Ovary (tissue), 10 donors: ENCODE measurements at regions of chr20 and their contacts with region 1.

Region 1: GRCh38 chr20:37426106-37426505 is 80.2 kb downstream of the SRC start:
- DNase-seq: no peak
- H3K4me3 ChIP-seq: no peak overlapping the region
- H3K27ac ChIP-seq: no peak overlapping the region
- H3K4me1 ChIP-seq: no peaks in the 10 kb centered on the region
- H3K27me3 ChIP-seq: no peaks in the 10 kb centered on the region
- CTCF ChIP-seq: no peak
- EP300 ChIP-seq: no peak
- POLR2A ChIP-seq: no peak

Region 2: GRCh38 chr20:36408219-36408618 is 1017.9 kb before region 1 on chr20:
- intact Hi-C with region 1: loop called in 1 of 4 experiments (anchors 5 kb)
- DNase-seq: no peak
- H3K4me3 ChIP-seq: no peak overlapping the region
- H3K27ac ChIP-seq: no peak overlapping the region
- H3K4me1 ChIP-seq: no peaks in the 10 kb centered on the region
- H3K27me3 ChIP-seq: no peaks in the 10 kb centered on the region
- CTCF ChIP-seq: no peak
- EP300 ChIP-seq: no peak
- POLR2A ChIP-seq: no peak

Region 3: DNA sequence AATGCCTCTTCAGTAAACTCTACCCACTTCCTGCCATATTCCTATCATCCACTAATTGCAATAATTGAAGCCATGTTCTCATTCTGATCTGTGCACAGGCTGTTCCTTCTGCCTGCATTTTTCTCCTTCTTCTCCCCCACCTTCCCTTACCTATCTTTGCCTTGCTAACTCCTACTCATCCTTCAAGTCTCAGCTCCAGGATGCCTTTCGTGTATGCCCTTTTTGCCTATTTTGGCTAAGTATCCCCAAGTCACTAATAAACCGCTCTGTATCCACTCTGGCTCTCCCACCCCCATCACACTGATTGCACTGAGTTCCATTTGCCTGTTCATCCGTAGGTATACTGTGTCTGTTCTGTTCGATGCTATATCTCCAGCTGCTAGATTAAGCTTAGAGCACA is 253.3 kb before region 1 on chr20:
- intact Hi-C with region 1: no loop called
- DNase-seq: no peak
- H3K4me3 ChIP-seq: no peak overlapping the region
- H3K27ac ChIP-seq: no peak overlapping the region
- H3K4me1 ChIP-seq: no peaks in the 10 kb centered on the region
- H3K27me3 ChIP-seq: no peaks in the 10 kb centered on the region
- CTCF ChIP-seq: no peak
- EP300 ChIP-seq: no peak
- POLR2A ChIP-seq: no peak

Region 4: DNA sequence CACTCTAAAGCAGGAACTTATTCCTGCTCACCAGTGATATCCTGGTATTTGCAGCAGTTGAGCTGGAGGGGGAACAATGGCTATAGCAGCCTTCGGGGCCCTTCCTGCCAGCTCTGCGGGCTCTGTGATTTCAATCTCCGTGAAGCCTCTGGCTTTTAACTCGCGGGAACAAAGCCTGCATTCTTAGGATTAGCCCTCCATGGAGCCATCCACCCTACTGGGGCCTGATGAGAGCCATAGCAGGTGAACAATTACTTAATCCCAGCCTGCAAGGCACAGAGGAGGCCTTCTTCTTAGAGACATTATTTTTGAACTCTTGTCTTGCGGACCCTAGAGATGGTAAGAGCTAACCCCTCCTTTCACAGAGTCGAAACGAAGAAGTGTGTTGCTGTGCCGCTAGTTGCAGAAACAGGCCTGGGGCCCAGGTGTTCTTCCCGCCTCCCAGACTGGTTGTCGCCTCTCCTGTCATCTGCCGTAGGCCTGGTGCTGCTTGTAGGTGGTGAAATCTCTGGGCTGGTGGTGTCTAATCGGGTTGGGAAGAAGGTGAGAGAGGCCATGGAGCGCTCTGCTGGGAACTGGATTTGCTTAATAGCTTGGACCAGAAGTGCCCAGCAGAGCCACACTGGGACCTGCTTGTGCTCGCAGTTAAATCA is 174.2 kb before region 1 on chr20:
- intact Hi-C with region 1: no loop called
- DNase-seq: no peak
- H3K4me3 ChIP-seq: no peak overlapping the region
- H3K27ac ChIP-seq: no peak overlapping the region
- H3K4me1 ChIP-seq: no peaks in the 10 kb centered on the region
- H3K27me3 ChIP-seq: no peaks in the 10 kb centered on the region
- CTCF ChIP-seq: no peak
- EP300 ChIP-seq: no peak
- POLR2A ChIP-seq: no peak